ENCODE measurements at regions of chr6 and their contacts with region 1.

Region 1: DNA sequence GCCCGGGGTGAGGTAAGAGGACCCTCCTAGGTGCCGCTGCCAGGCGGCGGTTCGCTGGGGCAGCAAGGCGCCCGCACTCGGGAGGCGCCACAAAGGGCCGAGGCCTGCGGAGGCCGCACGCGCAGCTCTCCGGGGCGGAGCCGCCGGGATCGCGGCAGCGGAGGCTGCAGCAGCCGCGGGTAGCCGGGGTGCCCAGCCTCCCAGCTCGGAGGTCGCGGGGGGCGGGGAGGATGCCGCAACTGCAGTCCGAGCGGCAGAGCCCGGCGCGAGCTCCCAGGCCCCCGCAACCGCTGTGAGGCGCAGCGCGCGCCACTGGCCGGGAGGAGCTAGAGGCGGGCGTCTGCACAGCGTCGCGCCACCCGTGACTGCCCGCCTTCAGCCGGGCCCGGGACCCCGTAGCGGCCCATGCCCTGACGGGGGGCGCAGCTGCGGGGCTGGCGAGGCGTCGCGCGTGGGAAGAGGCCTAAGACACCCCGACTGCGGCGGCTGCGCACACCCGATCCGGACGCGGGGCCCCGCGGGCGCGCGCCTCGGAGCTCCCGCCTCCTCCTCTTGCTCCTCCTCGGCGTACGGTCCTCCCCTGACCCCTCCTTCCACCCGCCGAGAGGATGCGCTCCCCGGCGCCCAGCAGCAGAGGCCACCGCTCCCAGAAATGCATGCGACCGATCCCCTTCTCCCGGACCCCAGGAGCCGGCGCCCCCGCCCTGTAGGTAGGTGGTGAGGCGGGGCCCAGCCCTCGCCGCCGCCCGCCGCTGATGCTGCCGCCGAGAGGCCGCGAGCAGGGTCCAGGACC is at the start of gene NCOA7:
- DNase-seq: peak; percentile 68 to 91 (median 79)
- ATAC-seq: peak; percentile 74
- H3K4me3 ChIP-seq: peak within 1 kb of the TSS; percentile 83
- H3K4me3 Mint-ChIP-seq: peak within 1 kb of the TSS; percentile 94
- H3K27ac ChIP-seq: peak within 1 kb of the TSS; percentile 82 to 86
- H3K27ac Mint-ChIP-seq: peak within 1 kb of the TSS; percentile 99
- H3K4me1 ChIP-seq: peaks cover 25% of the 10 kb centered on the region
- H3K4me1 Mint-ChIP-seq: peaks cover 61% of the 10 kb centered on the region
- H3K27me3 ChIP-seq: no peaks in the 10 kb centered on the region
- H3K27me3 Mint-ChIP-seq: no peaks in the 10 kb centered on the region
- CTCF ChIP-seq: no peak
- total RNA-seq, gene NCOA7: 34.6 to 35.7 TPM

Region 2: DNA sequence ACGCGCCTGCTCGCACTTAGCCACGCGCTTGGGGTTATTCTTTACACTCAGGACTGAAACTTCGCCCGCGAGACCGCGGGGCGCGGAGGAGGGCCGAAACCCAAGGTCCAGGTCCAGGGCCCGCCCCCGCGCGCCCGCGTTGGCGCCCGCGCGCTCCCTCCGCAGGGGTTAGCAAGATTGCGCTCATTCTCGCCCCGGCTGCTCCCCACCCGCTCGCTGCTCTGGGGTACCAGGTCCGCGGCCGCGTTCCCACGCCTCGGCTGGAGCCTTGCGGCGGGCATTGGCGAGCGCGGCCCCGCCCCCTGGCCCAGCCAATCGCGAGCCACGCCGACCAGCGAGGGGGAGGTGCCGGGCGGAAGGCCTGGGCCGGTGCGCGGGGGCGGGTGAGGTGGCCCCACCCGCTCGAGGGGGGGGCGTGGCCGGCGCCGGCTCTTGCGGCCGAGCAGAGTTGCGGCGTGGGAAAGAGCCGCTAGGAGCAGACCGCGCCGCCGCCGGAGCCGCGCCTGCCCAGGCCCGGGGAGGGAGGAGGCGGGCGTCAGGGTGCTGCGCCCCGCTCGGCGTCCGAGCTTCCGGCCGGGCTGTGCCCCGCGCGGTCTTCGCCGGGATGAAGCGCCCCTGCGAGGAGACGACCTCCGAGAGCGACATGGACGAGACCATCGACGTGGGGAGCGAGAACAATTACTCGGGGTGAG is 41.2 kb before region 1 on chr6 and contains the start of gene HEY2:
- CTCF ChIA-PET with region 1: interaction called, 3 read pairs
- POLR2A ChIA-PET with region 1: interaction called, 33 read pairs
- intact Hi-C with region 1: no loop called
- DNase-seq: peak; percentile 55 to 92 (median 76)
- ATAC-seq: peak; percentile 63
- H3K4me3 ChIP-seq: peak within 1 kb of the TSS; percentile 67
- H3K4me3 Mint-ChIP-seq: peak within 1 kb of the TSS; percentile 93
- H3K27ac ChIP-seq: no peak within 1 kb of the TSS
- H3K27ac Mint-ChIP-seq: peak within 1 kb of the TSS; percentile 43
- H3K4me1 ChIP-seq: peaks cover 38% of the 10 kb centered on the region
- H3K4me1 Mint-ChIP-seq: peaks cover 38% of the 10 kb centered on the region
- H3K27me3 ChIP-seq: peaks cover 44 to 58% of the 10 kb centered on the region in 2 experiments
- H3K27me3 Mint-ChIP-seq: peaks cover 85% of the 10 kb centered on the region
- CTCF ChIP-seq: peak; percentile 16
- total RNA-seq, gene HEY2: 0.08 to 0.30 TPM

Region 3: DNA sequence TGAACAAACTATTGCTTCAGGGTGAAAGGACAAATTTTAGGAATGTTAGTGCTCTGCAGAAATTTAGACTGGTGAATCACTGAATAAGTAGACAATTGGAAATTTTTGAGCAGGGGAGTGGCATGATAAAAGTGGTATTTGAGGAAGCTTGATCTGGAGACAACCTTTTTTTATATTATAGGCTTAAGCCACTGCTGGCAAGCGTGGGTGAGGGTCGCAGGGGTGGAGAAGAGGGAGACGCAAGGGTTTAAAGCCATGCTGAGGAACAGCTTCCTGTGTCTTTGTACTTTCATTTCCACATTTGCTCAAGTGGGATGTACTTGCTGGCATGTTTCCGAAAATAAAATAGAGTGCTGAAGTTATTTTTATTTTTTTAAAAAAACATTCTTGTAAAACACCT is 23.9 kb after region 1 on chr6:
- CTCF ChIA-PET with region 1: interaction called, 10 read pairs
- POLR2A ChIA-PET with region 1: interaction called, 9 read pairs
- intact Hi-C with region 1: no loop called
- DNase-seq: no peak
- ATAC-seq: no peak
- H3K4me3 ChIP-seq: no peak overlapping the region
- H3K4me3 Mint-ChIP-seq: no peak overlapping the region
- H3K27ac ChIP-seq: no peak overlapping the region
- H3K27ac Mint-ChIP-seq: no peak overlapping the region
- H3K4me1 ChIP-seq: peaks cover 18% of the 10 kb centered on the region
- H3K4me1 Mint-ChIP-seq: peaks cover 71% of the 10 kb centered on the region
- H3K27me3 ChIP-seq: no peaks in the 10 kb centered on the region
- H3K27me3 Mint-ChIP-seq: no peaks in the 10 kb centered on the region
- CTCF ChIP-seq: no peak

Region 4: DNA sequence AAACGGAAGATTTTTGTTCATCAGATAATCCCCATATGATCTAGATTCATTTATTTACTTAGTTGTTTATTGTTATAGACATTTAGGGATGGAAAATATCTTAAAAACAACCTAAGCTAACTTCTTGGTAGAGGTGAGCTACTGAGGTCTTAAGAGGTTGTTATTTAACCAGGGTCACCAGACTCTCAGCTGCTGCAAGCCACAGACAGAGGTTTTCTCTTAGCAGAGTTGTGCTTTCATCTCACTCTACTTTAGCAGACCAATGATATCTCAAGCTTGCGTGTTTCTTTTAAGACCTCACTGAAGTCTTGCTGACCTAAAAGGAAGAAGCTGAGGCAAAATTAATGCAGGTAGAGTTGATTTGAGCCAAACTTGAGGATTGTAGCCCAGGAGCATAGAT is 43.8 kb after region 1 on chr6:
- CTCF ChIA-PET with region 1: interaction called, 9 read pairs
- POLR2A ChIA-PET with region 1: interaction called, 109 read pairs
- intact Hi-C with region 1: loop called (anchors 2 to 5 kb)
- DNase-seq: peak in 6 of 14 experiments; percentile 10 to 61 (median 32)
- ATAC-seq: peak; percentile 62
- H3K4me3 ChIP-seq: no peak overlapping the region
- H3K4me3 Mint-ChIP-seq: peak overlapping the region; percentile 8
- H3K27ac ChIP-seq: peak overlapping the region in 1 of 2 donors; percentile 18
- H3K27ac Mint-ChIP-seq: peak overlapping the region; percentile 83
- H3K4me1 ChIP-seq: peaks cover 31% of the 10 kb centered on the region
- H3K4me1 Mint-ChIP-seq: peaks cover 63% of the 10 kb centered on the region
- H3K27me3 ChIP-seq: no peaks in the 10 kb centered on the region
- H3K27me3 Mint-ChIP-seq: no peaks in the 10 kb centered on the region
- CTCF ChIP-seq: no peak

Region 5: DNA sequence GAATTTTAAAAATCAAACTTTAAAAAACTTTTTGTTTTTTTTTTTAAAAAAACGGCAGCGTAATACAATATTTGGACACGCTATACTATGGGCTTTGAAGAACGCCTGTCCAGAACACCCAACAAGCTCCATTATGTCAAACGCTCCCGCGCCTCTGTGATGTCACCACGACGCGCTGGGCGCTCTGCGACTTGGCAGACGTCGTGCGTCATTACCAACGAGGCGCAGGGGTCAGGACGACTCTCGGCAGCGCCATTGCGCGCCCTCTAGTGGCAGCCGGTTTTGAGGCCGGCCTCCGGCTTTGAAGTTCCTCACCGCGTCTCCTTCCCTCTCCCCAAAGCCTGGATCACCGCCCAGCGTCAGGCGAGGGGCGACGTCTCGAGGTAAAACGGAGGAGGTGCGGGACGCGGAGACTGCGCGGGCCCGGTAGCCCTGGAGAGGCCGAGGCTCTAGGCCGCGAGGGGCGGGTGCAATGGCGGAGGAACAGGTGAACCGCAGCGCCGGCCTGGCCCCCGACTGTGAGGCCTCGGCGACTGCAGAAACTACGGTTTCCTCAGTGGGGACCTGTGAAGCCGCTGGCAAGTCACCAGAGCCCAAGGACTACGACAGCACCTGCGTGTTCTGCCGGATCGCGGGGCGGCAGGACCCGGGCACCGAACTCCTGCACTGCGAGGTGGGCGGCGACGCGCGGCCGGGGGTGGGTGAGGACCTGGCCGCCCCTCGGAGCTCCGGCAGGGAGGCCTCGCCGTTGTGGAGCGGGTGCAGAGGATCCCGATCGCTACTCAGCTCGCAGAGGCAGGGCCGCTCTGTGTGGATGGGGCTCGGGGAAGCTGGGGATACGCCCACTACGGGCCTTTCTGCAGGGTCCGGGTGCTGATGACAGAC is 166.2 kb after region 1 on chr6 and contains the start of gene HINT3:
- CTCF ChIA-PET with region 1: interaction called, 50 read pairs
- POLR2A ChIA-PET with region 1: interaction called, 128 read pairs
- intact Hi-C with region 1: loop called (anchors 1 kb)
- DNase-seq: peak; percentile 96 to 99 (median 98)
- ATAC-seq: peak; percentile 86
- H3K4me3 ChIP-seq: peak within 1 kb of the TSS; percentile 86
- H3K4me3 Mint-ChIP-seq: no peak within 1 kb of the TSS
- H3K27ac ChIP-seq: peak within 1 kb of the TSS; percentile 94 to 95
- H3K27ac Mint-ChIP-seq: no peak within 1 kb of the TSS
- H3K4me1 ChIP-seq: peaks cover 15% of the 10 kb centered on the region
- H3K4me1 Mint-ChIP-seq: peaks cover 22% of the 10 kb centered on the region
- H3K27me3 ChIP-seq: no peaks in the 10 kb centered on the region
- H3K27me3 Mint-ChIP-seq: no peaks in the 10 kb centered on the region
- CTCF ChIP-seq: peak; percentile 98
- total RNA-seq, gene HINT3: 10.4 TPM

Region 6: GRCh38 chr6:125986300-125987025 is 195.9 kb after region 1 on chr6 and contains the start of gene TRMT11:
- CTCF ChIA-PET with region 1: no interaction called
- POLR2A ChIA-PET with region 1: interaction called, 94 read pairs
- intact Hi-C with region 1: no loop called
- DNase-seq: peak; percentile 63 to 92 (median 76)
- ATAC-seq: peak; percentile 95
- H3K4me3 ChIP-seq: peak within 1 kb of the TSS; percentile 89
- H3K4me3 Mint-ChIP-seq: peak within 1 kb of the TSS; percentile 52
- H3K27ac ChIP-seq: peak within 1 kb of the TSS; percentile 54 to 88
- H3K27ac Mint-ChIP-seq: no peak within 1 kb of the TSS
- H3K4me1 ChIP-seq: peaks cover 13% of the 10 kb centered on the region
- H3K4me1 Mint-ChIP-seq: no peaks in the 10 kb centered on the region
- H3K27me3 ChIP-seq: no peaks in the 10 kb centered on the region
- H3K27me3 Mint-ChIP-seq: no peaks in the 10 kb centered on the region
- CTCF ChIP-seq: no peak
- total RNA-seq, gene TRMT11: 21.6 to 22.5 TPM

Measured in CD4-positive, alpha-beta T cell (primary cell).